AG04449 (cell line): ENCODE measurements at regions of chr7 and their contacts with region 1.

Region 1: DNA sequence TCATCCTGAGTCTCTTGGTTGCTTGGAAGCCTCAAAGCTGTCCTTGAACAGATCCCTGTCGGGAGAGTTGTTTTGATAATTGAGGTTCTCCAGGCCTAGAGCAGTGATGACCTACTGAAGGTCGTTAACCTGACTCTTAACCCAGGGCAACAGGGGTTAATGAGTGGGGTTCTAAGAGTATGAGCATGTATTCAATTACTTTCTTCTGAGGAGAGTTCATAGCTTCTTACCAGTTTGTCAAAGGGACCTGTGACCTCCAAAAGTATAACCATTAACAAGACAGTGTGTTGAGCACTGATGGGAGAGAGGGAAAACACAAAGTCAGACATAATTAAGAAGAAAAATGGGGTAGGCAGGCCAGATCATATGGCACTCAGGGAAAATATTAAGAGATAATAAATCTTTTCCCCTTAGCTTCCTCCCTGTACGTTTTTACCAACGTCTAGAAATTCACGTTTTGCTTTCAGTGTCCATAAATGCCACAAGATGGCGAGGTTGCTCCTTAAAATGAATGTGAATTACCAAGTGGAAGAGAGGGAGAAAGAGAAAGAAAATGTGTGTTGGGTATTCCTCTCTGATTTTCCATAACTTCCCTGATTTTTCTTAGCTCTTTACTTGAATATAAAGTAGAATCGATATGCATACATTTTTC is 97.6 kb downstream of the SUGCT start:
- DNase-seq: peak; percentile 21
- H3K4me3 ChIP-seq: no peak overlapping the region
- CTCF ChIP-seq: peak; percentile 60

Region 2: DNA sequence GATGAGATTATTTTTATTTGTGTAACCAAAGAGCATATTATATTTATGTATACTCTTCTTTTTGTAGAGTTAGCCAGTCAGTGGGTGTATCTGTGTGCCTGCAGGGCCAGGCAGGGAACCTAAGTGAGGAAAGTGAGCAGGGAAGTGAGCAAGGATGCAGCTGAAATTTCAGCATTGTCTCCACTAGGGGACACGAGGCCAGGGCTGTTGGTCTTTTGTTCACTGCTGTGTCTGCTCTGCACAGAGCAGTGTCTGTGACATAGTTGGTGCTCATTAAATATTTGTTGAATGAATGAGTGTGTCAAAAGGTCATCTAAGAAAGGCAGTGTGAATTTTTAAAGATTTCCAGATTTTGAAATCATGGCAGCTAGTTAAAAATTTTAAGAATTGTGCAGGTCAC is 45.8 kb before region 1 on chr7:
- CTCF ChIA-PET with region 1: no interaction called
- POLR2A ChIA-PET with region 1: no interaction called
- DNase-seq: no peak
- H3K4me3 ChIP-seq: no peak overlapping the region
- CTCF ChIP-seq: no peak

Region 3: DNA sequence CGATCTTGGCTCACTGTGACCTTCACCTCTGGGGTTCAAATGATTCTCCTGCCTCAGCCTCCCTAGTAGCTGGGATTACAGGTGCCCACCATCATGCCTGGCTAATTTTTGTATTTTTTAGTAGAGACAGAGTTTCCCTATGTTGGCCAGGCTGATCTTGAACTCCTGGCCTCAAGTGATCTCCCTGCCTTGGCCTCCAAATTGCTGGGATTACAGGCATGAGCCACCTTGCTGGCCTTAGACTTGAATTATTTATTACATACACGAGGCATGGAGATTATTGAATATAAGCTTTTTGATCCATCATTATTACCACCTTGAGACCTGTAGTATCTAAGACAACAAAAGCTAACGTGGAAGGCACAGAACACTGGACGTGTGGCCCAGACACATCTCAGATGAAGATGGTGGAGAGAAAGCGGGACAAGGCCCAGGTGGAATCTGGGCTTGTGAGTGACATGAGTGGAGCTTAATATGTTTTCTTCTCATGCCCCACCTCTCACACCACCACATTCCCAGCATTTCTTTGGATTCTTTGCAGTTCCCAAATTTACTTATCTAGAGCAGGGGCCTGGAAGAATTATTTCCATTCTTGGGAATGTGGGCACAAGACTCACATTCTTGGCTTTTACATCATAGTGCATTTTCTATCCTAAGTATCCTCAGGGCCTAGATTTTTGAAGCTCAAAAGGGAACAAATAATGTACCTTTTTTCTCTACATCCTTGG is 20.9 kb before region 1 on chr7:
- CTCF ChIA-PET with region 1: interaction called, 12 read pairs
- POLR2A ChIA-PET with region 1: no interaction called
- DNase-seq: no peak
- H3K4me3 ChIP-seq: no peak overlapping the region
- CTCF ChIP-seq: no peak

Region 4: GRCh38 chr7:40299097-40299496 is 66.7 kb after region 1 on chr7:
- CTCF ChIA-PET with region 1: interaction called, 13 read pairs
- POLR2A ChIA-PET with region 1: no interaction called
- DNase-seq: peak; percentile 62
- H3K4me3 ChIP-seq: no peak overlapping the region
- CTCF ChIP-seq: no peak

Region 5: GRCh38 chr7:40658729-40659128 is 426.4 kb after region 1 on chr7:
- CTCF ChIA-PET with region 1: no interaction called
- POLR2A ChIA-PET with region 1: no interaction called
- DNase-seq: peak; percentile 26
- H3K4me3 ChIP-seq: no peak overlapping the region
- CTCF ChIP-seq: no peak

Region 6: GRCh38 chr7:40763318-40764287 is 531.2 kb after region 1 on chr7:
- CTCF ChIA-PET with region 1: interaction called, 46 read pairs
- POLR2A ChIA-PET with region 1: no interaction called
- DNase-seq: peak; percentile 83
- H3K4me3 ChIP-seq: peak overlapping the region; percentile 29; the same call in 1 of the 2 replicates
- CTCF ChIP-seq: peak; percentile 59